ENCODE measurements at regions of chr17 and their contacts with region 1.

Region 1: DNA sequence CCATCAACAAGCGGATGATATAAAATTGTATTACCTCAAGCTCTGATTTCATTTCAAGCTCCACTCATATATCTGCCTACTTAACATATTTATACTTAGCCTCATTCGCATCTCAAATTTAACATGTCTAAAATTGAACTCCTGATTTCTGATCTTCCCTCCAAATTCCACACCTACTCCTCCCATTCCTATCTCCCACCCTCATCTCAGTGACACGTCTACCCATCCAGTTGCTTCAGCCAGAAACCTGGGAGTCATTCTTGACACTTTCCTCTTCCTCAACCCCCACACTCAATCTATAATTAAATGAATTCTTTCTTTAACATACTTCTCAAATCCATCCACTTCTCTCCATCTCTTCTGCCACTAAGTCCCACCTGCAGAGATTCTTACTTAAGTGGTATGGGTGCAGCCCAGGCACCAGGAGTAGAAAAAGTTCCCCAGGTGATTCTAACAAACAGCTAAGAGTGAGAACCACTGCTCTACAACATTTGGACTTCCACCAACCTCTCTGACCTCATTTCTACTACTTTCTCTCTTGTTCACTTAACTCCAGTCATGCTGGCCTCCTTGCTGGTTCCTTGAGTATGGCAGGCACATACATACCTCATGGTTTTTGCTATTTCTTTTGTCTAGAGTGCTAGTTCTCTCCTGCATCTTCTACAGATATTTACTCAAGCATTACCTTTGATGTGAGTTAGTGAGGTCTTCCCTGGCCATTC is 18.1 kb downstream of the SPOP start:
- DNase-seq: no peak
- ATAC-seq: no peak
- H3K4me3 ChIP-seq: no peak overlapping the region
- H3K27ac ChIP-seq: no peak overlapping the region
- H3K4me1 ChIP-seq: peaks cover 56% of the 10 kb centered on the region
- H3K27me3 ChIP-seq: no peaks in the 10 kb centered on the region
- CTCF ChIP-seq: no peak

Region 2: DNA sequence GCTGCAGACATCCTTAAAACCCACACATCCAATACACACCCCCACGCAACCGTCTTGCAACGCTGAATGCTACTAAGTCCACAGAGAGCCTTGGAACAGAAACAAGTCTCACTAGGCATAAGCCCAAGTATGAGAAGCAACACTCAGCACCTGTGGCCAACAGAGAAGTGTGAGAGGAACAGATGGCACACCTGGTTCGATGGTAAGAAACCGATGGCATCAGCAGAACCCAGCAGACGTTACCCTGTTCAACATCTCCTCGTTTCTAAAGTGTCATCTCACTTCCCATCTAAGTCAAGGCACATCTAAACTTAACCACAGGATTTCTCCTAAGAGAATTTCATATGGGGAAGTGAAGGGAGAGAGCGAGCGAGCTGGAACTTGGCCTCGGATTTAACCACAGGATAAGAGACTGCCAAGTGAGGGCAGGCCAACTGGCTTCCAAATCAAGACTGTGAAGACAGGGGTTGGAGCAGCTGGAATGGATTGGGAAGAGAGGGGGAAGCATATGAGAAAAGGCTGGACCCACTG is 43.2 kb before region 1 on chr17:
- intact Hi-C with region 1: loop called in 1 of 2 experiments (anchors 5 kb)
- DNase-seq: peak; percentile 79 to 82
- ATAC-seq: peak; percentile 79 to 85 (median 84)
- H3K4me3 ChIP-seq: peak overlapping the region; percentile 13
- H3K27ac ChIP-seq: peak overlapping the region; percentile 43
- H3K4me1 ChIP-seq: peaks cover 49% of the 10 kb centered on the region
- H3K27me3 ChIP-seq: no peaks in the 10 kb centered on the region
- CTCF ChIP-seq: no peak

Region 3: GRCh38 chr17:49707608-49708514 is 48.0 kb after region 1 on chr17 and contains the start of gene SLC35B1:
- intact Hi-C with region 1: no loop called
- DNase-seq: peak; percentile 100
- ATAC-seq: peak; percentile 99 to 100 (median 99)
- H3K4me3 ChIP-seq: peak within 1 kb of the TSS; percentile 81
- H3K27ac ChIP-seq: peak within 1 kb of the TSS; percentile 98
- H3K4me1 ChIP-seq: peaks cover 9% of the 10 kb centered on the region
- H3K27me3 ChIP-seq: no peaks in the 10 kb centered on the region
- CTCF ChIP-seq: peak; percentile 57
- total RNA-seq, gene SLC35B1: 39.5 to 69.5 (median 60.9) TPM

Measured in psoas muscle (tissue), 8 donors.